ENCODE measurements at regions of chr10 and their contacts with region 1.

Region 1: GRCh38 chr10:95688648-95689047 is 5.1 kb downstream of the TCTN3 start:
- DNase-seq: no peak
- ATAC-seq: peak; percentile 51
- H3K4me3 ChIP-seq: no peak overlapping the region
- H3K27ac ChIP-seq: no peak overlapping the region
- H3K4me1 ChIP-seq: no peaks in the 10 kb centered on the region; the same call in 1 of the 2 replicates
- H3K27me3 ChIP-seq: no peaks in the 10 kb centered on the region
- CTCF ChIP-seq: peak; percentile 17 to 34 (median 28); a peak in 3 of 6 replicates
- EP300 ChIP-seq: no peak
- POLR2A ChIP-seq: no peak
- RAD21 ChIP-seq: 0 out of 2 replicates have a peak, but pooled peaks have one; percentile 3

Region 2: DNA sequence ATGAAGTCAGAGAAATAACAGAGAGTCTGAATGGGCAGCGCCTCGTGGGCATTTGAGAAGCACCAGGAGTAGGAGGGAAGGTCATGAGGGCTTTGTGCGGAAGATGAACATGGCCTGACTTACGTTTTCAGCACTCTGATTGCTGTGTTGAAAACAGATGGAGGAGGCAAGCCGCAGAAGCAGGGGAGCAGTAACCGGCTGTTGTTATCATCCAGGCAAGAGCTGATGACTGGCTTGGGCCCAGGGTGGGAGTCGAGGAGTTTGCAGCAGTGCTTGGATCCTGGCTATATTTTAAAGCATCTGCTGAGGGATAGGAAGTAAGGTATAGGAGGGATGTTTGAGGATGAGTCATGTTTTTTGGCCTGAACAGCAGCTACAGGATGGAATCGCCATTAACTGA is 385.1 kb before region 1 on chr10:
- CTCF ChIA-PET with region 1: no interaction called
- POLR2A ChIA-PET with region 1: no interaction called
- RAD21 ChIA-PET with region 1: no interaction called
- SMC1A ChIA-PET with region 1: no interaction called
- in situ Hi-C with region 1: no loop called
- intact Hi-C with region 1: no loop called
- DNase-seq: no peak
- ATAC-seq: no peak
- H3K4me3 ChIP-seq: no peak overlapping the region
- H3K27ac ChIP-seq: no peak overlapping the region
- H3K4me1 ChIP-seq: peaks cover 4% of the 10 kb centered on the region
- H3K27me3 ChIP-seq: no peaks in the 10 kb centered on the region
- CTCF ChIP-seq: no peak
- EP300 ChIP-seq: no peak
- POLR2A ChIP-seq: no peak
- RAD21 ChIP-seq: no peak

Region 3: GRCh38 chr10:95605163-95605562 is 83.5 kb before region 1 on chr10:
- CTCF ChIA-PET with region 1: no interaction called
- POLR2A ChIA-PET with region 1: no interaction called
- RAD21 ChIA-PET with region 1: no interaction called
- SMC1A ChIA-PET with region 1: no interaction called
- in situ Hi-C with region 1: no loop called
- intact Hi-C with region 1: no loop called
- DNase-seq: no peak
- ATAC-seq: no peak
- H3K4me3 ChIP-seq: no peak overlapping the region
- H3K27ac ChIP-seq: no peak overlapping the region
- H3K4me1 ChIP-seq: no peaks in the 10 kb centered on the region
- H3K27me3 ChIP-seq: no peaks in the 10 kb centered on the region
- CTCF ChIP-seq: no peak
- EP300 ChIP-seq: no peak
- POLR2A ChIP-seq: peak; percentile 44; the same call in 1 of the 2 replicates
- RAD21 ChIP-seq: no peak

Region 4: GRCh38 chr10:95864906-95865813 is 176.5 kb after region 1 on chr10:
- CTCF ChIA-PET with region 1: interaction called, 86 read pairs
- POLR2A ChIA-PET with region 1: interaction called, 26 read pairs
- RAD21 ChIA-PET with region 1: interaction called, 108 read pairs
- SMC1A ChIA-PET with region 1: interaction called, 52 read pairs
- in situ Hi-C with region 1: no loop called
- intact Hi-C with region 1: no loop called
- DNase-seq: peak; percentile 42
- ATAC-seq: peak; percentile 91
- H3K4me3 ChIP-seq: no peak overlapping the region
- H3K27ac ChIP-seq: peak overlapping the region; percentile 40; the same call in 1 of the 2 replicates
- H3K4me1 ChIP-seq: peaks cover 9% of the 10 kb centered on the region; the same call in 1 of the 2 replicates
- H3K27me3 ChIP-seq: no peaks in the 10 kb centered on the region
- CTCF ChIP-seq: peak; percentile 66 to 77 (median 70); a peak in 5 of 6 replicates
- EP300 ChIP-seq: no peak
- POLR2A ChIP-seq: no peak
- RAD21 ChIP-seq: peak; percentile 80

Measured in GM12878 (cell line).